AG04450 (cell line): ENCODE measurements at regions of chr19 and their contacts with region 1.

Region 1: GRCh38 chr19:8412783-8413628 is at the start of gene MARCHF2:
- DNase-seq: peak; percentile 94
- H3K4me3 ChIP-seq: peak within 1 kb of the TSS; percentile 68
- H3K27ac ChIP-seq: no peak within 1 kb of the TSS
- H3K27me3 ChIP-seq: no peaks in the 10 kb centered on the region
- CTCF ChIP-seq: peak; percentile 62
- polyA plus RNA-seq, gene MARCHF2: 14.7 and 20.0 TPM in 2 replicates

Region 2: DNA sequence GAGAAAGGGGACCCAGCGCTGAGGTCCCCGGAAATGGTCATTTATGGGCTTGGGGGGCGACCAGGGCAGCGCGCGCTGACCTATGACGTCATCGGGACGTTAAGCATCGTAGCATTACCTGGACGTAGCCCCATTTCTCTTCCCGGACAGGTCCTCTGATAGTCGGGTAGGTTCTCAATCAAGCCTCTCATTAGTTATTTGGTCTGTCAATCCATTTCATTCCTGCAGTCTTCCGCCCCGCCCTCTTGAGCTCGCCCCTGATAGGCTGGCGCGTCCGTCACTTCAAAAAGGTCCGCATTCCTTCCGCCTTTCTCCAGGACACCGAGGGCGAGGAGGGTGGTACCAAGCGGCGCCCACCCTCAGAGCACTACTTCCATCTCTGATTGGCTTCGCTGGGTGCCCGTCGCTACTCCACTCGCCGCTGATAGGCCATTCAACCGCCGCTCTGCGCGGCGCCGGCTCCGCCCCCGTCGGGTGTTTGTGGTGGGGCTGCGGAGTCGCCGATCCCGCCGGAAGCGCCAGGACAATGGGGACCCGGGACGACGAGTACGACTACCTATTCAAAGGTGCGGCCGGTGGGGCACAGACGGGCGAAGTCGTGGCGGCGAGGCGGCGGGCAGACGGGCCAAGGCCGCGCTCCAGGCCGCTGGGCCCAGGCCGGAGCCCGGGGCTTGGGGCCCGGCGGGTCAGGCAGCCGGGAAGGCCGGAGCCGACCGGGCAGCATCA is 23.0 kb before region 1 on chr19 and contains the start of gene RAB11B:
- CTCF ChIA-PET with region 1: interaction called, 10 read pairs
- POLR2A ChIA-PET with region 1: interaction called, 4 read pairs
- DNase-seq: peak; percentile 99
- H3K4me3 ChIP-seq: peak within 1 kb of the TSS; percentile 79
- H3K27ac ChIP-seq: peak within 1 kb of the TSS; percentile 73
- H3K27me3 ChIP-seq: no peaks in the 10 kb centered on the region
- CTCF ChIP-seq: no peak
- polyA plus RNA-seq, gene RAB11B: 25.3 and 37.6 TPM in 2 replicates

Region 3: GRCh38 chr19:8398311-8398771 is 14.7 kb before region 1 on chr19:
- CTCF ChIA-PET with region 1: interaction called, 17 read pairs
- POLR2A ChIA-PET with region 1: interaction called, 6 read pairs
- DNase-seq: no peak
- H3K4me3 ChIP-seq: no peak overlapping the region
- H3K27ac ChIP-seq: no peak overlapping the region
- H3K27me3 ChIP-seq: no peaks in the 10 kb centered on the region
- CTCF ChIP-seq: no peak

Region 4: DNA sequence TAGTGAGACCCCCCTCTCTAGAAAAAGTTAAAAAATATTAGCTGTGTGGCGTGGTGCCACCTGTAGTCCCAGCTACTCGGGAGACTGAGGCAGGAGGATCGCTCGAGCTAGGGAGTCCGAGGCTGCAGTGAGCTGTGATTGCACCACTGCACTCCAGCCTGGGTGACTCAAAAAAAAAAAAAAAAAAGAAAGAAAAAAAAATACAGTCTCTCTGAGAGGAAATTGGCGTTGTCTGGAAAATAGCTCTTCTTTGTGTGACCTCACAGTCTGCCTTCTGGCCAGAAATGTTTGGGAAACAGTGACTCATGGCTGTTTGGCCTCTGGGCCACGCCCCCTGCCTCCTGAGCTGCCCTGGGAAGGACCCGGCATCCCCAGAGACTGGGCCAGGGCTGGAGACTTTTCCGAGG is 10.8 kb after region 1 on chr19:
- CTCF ChIA-PET with region 1: interaction called, 13 read pairs
- POLR2A ChIA-PET with region 1: interaction called, 16 read pairs
- DNase-seq: peak; percentile 85
- H3K4me3 ChIP-seq: no peak overlapping the region
- H3K27ac ChIP-seq: no peak overlapping the region
- H3K27me3 ChIP-seq: no peaks in the 10 kb centered on the region
- CTCF ChIP-seq: no peak

Region 5: DNA sequence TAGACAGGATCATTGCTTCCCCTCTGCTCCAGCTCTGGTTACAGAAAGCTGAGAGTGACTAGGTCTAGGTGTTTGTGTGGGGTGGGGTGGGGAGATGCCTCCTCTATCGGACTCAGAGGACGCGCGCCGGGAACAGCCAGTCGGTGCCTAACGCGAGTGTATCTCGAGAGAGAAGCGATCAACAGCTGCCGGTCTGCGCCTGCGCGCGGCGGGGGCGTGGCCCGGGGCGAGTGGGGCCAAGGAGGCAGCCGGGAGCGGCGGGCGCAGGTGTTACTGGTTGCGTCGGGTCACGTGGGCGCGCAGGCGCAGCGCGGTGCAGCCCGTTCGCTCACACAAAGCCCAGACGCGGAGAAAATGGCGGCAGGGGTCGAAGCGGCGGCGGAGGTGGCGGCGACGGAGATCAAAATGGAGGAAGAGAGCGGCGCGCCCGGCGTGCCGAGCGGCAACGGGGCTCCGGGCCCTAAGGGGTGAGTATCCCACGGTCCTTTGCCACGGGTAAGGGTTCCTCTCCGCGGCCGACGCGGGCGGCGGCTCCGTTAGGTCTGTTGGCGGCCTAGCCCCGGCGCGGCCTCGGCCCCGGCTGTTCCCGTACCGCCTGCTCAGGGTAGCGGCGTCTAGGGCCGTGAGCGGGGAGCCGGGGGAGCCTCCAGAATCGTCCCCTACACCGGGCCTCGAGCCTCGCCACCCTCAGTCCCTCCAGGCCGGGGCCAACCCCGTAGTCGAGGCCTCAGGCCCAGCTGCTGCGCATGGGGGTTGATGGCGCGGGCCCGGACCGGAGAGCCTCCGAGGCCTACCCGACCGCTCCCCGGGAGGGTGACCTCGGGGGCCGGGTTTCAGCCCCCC is 31.9 kb after region 1 on chr19 and contains the start of gene HNRNPM:
- CTCF ChIA-PET with region 1: interaction called, 9 read pairs
- POLR2A ChIA-PET with region 1: interaction called, 15 read pairs
- DNase-seq: peak; percentile 89
- H3K4me3 ChIP-seq: peak within 1 kb of the TSS; percentile 87
- H3K27ac ChIP-seq: peak within 1 kb of the TSS; percentile 68
- H3K27me3 ChIP-seq: no peaks in the 10 kb centered on the region
- CTCF ChIP-seq: no peak
- polyA plus RNA-seq, gene HNRNPM: 99.6 and 122 TPM in 2 replicates

Region 6: GRCh38 chr19:8505680-8506401 is 92.8 kb after region 1 on chr19:
- CTCF ChIA-PET with region 1: interaction called, 17 read pairs
- POLR2A ChIA-PET with region 1: interaction called, 3 read pairs
- DNase-seq: peak; percentile 18
- H3K4me3 ChIP-seq: peak overlapping the region; percentile 61
- H3K27ac ChIP-seq: no peak overlapping the region
- H3K27me3 ChIP-seq: no peaks in the 10 kb centered on the region
- CTCF ChIP-seq: peak; percentile 92